HepG2 (cell line): ENCODE measurements at regions of chr12 and their contacts with region 1.

Region 1: DNA sequence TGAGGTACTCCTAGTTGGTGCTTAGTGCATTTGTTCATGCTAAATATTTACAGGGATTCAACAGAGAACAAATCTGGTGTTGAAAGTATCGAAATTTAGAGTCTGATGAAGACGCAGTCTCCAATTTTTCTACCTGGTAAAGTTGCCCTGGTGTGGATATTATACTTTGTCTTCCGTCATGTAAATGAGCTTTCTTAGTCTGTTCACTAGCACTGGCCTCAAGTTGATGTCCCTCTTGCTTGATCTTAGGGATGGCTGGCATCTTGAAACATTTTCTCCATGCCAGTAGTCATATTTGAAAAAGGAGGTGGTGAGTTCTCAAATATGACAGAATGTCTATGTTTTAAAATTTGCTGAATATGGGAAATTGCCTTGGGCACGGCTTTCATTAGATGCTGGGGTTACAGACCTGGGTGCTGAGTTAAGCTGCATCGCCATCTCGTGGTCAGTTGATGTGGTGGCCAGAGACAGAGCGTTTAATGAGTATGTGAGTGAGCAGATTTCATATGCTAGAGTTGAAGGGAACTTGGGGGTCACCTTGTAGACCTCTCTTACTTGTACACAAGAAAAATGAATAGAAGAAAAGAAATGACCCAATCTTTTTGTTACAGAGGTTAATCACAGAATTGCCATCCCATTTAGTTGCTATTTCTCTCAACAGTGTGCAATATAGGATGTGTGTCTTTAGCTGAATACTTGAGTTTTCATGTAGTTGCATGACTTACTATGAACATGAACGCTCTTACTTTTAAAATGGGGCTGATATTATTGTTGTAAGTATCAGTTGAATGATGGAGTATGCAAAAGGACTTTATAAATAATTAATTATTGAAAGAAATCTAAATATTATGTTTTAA is 172.8 kb upstream of the DCN start:
- DNase-seq: peak; percentile 47
- ATAC-seq: peak; percentile 99
- H3K4me3 ChIP-seq: no peak overlapping the region
- H3K27ac ChIP-seq: no peak overlapping the region
- H3K4me1 ChIP-seq: peaks cover 9% of the 10 kb centered on the region
- H3K27me3 ChIP-seq: no peaks in the 10 kb centered on the region
- CTCF ChIP-seq: peak; percentile 77
- EP300 ChIP-seq: no peak
- POLR2A ChIP-seq: no peak
- RAD21 ChIP-seq: peak; percentile 35; the same call in 1 of the 2 replicates

Region 2: GRCh38 chr12:90978117-90978770 is 377.1 kb before region 1 on chr12:
- CTCF ChIA-PET with region 1: interaction called, 16 read pairs
- POLR2A ChIA-PET with region 1: no interaction called
- in situ Hi-C with region 1: no loop called
- intact Hi-C with region 1: loop called (anchors 1 kb)
- DNase-seq: peak; percentile 16
- ATAC-seq: peak; percentile 77
- H3K4me3 ChIP-seq: no peak overlapping the region
- H3K27ac ChIP-seq: no peak overlapping the region
- H3K4me1 ChIP-seq: no peaks in the 10 kb centered on the region
- H3K27me3 ChIP-seq: no peaks in the 10 kb centered on the region
- CTCF ChIP-seq: peak; percentile 64
- EP300 ChIP-seq: no peak
- POLR2A ChIP-seq: no peak
- RAD21 ChIP-seq: no peak

Region 3: DNA sequence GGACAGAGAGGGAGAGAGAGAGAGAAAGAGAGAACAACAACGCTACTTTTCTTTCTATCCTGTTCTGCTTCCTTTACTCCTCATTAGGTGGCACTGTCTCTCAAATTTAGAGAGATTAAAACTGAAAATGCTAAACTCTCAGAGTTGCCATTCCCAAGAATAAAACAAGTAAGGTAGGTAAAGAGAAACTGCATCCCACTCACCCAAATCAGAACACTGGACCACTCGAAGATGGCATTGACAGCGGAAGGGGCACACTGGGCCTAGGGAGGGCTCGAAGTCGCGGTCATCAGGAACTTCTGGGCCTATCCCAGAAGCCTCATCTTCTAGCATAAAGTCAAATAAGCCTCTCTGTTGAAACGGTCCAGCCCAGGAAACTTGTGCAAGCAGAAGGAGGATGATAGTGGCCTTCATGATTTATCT is 177.2 kb before region 1 on chr12:
- CTCF ChIA-PET with region 1: no interaction called
- POLR2A ChIA-PET with region 1: no interaction called
- in situ Hi-C with region 1: no loop called
- intact Hi-C with region 1: loop called (anchors 1 kb)
- DNase-seq: peak; percentile 6
- ATAC-seq: peak; percentile 60; the same call in 2 of the 3 replicates
- H3K4me3 ChIP-seq: 0 out of 6 replicates have a peak overlapping the region, but pooled peaks of 1 of the 3 experiments have one; percentile 28
- H3K27ac ChIP-seq: no peak overlapping the region
- H3K4me1 ChIP-seq: no peaks in the 10 kb centered on the region
- H3K27me3 ChIP-seq: no peaks in the 10 kb centered on the region
- CTCF ChIP-seq: peak; percentile 33
- EP300 ChIP-seq: no peak
- POLR2A ChIP-seq: no peak
- RAD21 ChIP-seq: no peak

Region 4: DNA sequence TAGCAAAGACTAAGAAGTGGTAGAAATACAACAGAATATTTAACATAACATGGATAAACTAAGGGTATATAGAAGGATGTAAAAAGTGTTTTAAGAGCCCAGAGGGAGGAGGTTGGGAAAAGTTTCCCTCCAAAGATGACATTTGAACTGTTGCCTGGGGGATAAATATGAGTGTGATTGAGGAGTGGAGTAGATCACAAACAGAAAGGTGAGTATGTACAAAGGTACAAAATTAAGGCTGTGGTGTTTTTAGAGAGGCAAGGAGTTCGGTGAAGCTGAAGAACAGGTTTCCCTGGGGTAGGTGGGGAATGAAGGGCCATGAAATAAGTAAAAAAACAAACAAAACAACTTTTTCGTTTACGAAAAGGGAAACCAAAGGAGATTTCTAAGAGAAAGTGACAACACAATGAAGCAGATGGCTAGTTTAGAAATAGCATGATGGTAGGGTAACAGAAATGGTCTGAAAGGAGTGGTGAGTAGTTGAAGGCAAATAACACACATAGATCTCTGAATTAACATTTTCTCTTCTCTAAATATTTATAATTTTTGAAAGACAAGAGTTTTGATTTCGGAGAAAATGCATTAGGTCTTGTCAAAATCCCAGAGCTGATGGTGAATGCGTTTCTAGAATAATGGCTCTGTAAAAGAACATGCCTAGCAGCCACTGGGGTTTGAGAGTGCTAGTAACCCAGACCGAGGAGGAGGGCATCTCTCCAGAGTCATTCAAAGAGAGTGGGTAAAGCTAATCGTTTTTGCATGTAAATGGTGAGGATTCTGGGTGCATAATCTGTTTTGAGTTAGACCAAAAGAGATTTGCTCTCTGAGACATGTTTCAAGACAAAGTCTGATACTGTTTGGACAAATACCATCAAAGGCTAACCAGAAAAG is 67.7 kb after region 1 on chr12:
- CTCF ChIA-PET with region 1: no interaction called
- POLR2A ChIA-PET with region 1: no interaction called
- in situ Hi-C with region 1: no loop called
- intact Hi-C with region 1: no loop called
- DNase-seq: no peak
- ATAC-seq: no peak
- H3K4me3 ChIP-seq: no peak overlapping the region
- H3K27ac ChIP-seq: no peak overlapping the region
- H3K4me1 ChIP-seq: no peaks in the 10 kb centered on the region
- H3K27me3 ChIP-seq: no peaks in the 10 kb centered on the region
- CTCF ChIP-seq: no peak
- EP300 ChIP-seq: no peak
- POLR2A ChIP-seq: no peak
- RAD21 ChIP-seq: no peak